Mammary epithelial cell (primary cell): ENCODE measurements at regions of chr16 and their contacts with region 1.

Region 1: GRCh38 chr16:2838928-2839327 is 8.8 kb downstream of the ZG16B start:
- DNase-seq: peak; percentile 69
- H3K4me3 ChIP-seq: no peak overlapping the region
- H3K27ac ChIP-seq: no peak overlapping the region
- H3K4me1 ChIP-seq: peaks cover 38% of the 10 kb centered on the region
- H3K27me3 ChIP-seq: no peaks in the 10 kb centered on the region
- CTCF ChIP-seq: peak; percentile 91 to 97

Region 2: DNA sequence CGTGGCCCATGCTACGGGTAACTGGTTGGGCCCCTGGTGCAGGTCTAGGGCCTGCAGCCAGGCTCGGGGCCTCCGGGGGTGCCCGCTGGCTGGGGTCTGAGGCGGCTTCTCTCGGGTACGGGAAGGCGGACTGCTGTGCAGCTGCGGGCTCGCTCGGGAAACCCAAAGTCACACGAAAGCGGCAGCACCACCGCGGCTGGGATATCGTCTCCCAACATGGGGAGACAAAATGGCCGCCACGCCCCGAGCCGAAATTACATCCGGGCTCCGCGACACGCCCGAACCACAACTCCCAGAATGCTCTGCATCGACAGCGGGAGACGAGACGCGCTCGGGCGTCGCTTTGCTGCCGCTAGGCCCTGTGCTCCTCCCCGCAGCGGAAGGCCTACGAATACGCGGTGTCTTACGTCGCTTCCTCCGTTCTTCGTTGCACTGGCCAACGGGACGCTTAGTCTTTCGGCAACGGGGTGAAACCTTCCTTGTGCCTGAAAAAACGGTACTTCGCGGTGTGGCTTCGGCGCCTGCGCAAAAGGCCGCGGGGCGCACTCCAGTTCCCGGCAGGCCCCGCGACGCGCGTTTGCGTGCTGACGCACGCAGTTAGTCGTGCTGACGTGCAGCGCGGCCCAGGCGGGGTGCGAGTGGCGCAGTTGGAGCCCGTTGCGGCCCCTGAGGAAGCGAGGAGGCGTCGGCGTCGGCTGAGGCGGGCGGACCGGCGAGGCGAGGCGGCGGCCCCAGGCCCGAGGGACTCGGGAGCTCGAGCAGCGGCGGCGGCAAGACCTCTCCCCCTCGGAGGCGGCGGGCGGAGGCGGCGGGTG is 86.7 kb before region 1 on chr16 and contains the start of gene SRRM2:
- CTCF ChIA-PET with region 1: no interaction called
- dilution Hi-C with region 1: no loop called
- in situ Hi-C with region 1: no loop called
- intact Hi-C with region 1: loop called (anchors 5 kb)
- DNase-seq: peak; percentile 95
- H3K4me3 ChIP-seq: peak within 1 kb of the TSS; percentile 69 to 95 (median 95)
- H3K27ac ChIP-seq: peak within 1 kb of the TSS; percentile 91
- H3K4me1 ChIP-seq: peaks cover 21% of the 10 kb centered on the region
- H3K27me3 ChIP-seq: no peaks in the 10 kb centered on the region
- CTCF ChIP-seq: no peak
- total RNA-seq, gene SRRM2: 76.5 to 493 TPM

Region 3: GRCh38 chr16:2867987-2868789 is 29.3 kb after region 1 on chr16:
- CTCF ChIA-PET with region 1: interaction called, 27 read pairs
- dilution Hi-C with region 1: loop called (anchors 5 kb)
- in situ Hi-C with region 1: loop called (anchors 5 kb)
- intact Hi-C with region 1: loop called (anchors 1 kb)
- DNase-seq: peak; percentile 90
- H3K4me3 ChIP-seq: peak overlapping the region; percentile 55 to 65 (median 62)
- H3K27ac ChIP-seq: peak overlapping the region; percentile 70
- H3K4me1 ChIP-seq: peaks cover 7% of the 10 kb centered on the region
- H3K27me3 ChIP-seq: no peaks in the 10 kb centered on the region
- CTCF ChIP-seq: peak; percentile 90 to 97

Region 4: GRCh38 chr16:2911580-2912329 is 72.8 kb after region 1 on chr16 and contains the start of gene FLYWCH1:
- CTCF ChIA-PET with region 1: no interaction called
- dilution Hi-C with region 1: no loop called
- in situ Hi-C with region 1: loop called in 1 of 2 experiments (anchors 10 kb)
- intact Hi-C with region 1: loop called (anchors 1 kb)
- DNase-seq: peak; percentile 96
- H3K4me3 ChIP-seq: peak within 1 kb of the TSS; percentile 56 to 84 (median 71)
- H3K27ac ChIP-seq: peak within 1 kb of the TSS; percentile 13
- H3K4me1 ChIP-seq: peaks cover 24% of the 10 kb centered on the region
- H3K27me3 ChIP-seq: no peaks in the 10 kb centered on the region
- CTCF ChIP-seq: no peak
- total RNA-seq, gene FLYWCH1: 53.2 to 56.1 TPM